ENCODE measurements at regions of chr13 and their contacts with region 1.

Region 1: GRCh38 chr13:51619614-51620013 is 35.4 kb downstream of the WDFY2 start:
- DNase-seq: no peak
- ATAC-seq: no peak
- H3K4me3 Mint-ChIP-seq: no peak overlapping the region
- H3K27ac Mint-ChIP-seq: no peak overlapping the region
- H3K4me1 Mint-ChIP-seq: peaks cover 23% of the 10 kb centered on the region
- H3K27me3 Mint-ChIP-seq: no peaks in the 10 kb centered on the region
- CTCF ChIP-seq: no peak

Region 2: GRCh38 chr13:51659276-51660127 is 39.9 kb after region 1 on chr13:
- CTCF ChIA-PET with region 1: no interaction called
- POLR2A ChIA-PET with region 1: no interaction called
- intact Hi-C with region 1: loop called (anchors 5 kb)
- DNase-seq: no peak
- ATAC-seq: no peak
- H3K4me3 Mint-ChIP-seq: no peak overlapping the region
- H3K27ac Mint-ChIP-seq: no peak overlapping the region
- H3K4me1 Mint-ChIP-seq: peaks cover 17% of the 10 kb centered on the region
- H3K27me3 Mint-ChIP-seq: no peaks in the 10 kb centered on the region
- CTCF ChIP-seq: no peak

Region 3: GRCh38 chr13:52393572-52394357 is 774.2 kb after region 1 on chr13:
- CTCF ChIA-PET with region 1: no interaction called
- POLR2A ChIA-PET with region 1: no interaction called
- intact Hi-C with region 1: no loop called
- DNase-seq: no peak
- ATAC-seq: no peak
- H3K4me3 Mint-ChIP-seq: no peak overlapping the region
- H3K27ac Mint-ChIP-seq: no peak overlapping the region
- H3K4me1 Mint-ChIP-seq: no peaks in the 10 kb centered on the region
- H3K27me3 Mint-ChIP-seq: peaks cover 4% of the 10 kb centered on the region
- CTCF ChIP-seq: no peak

Measured in activated B cell treated with CpG ODN at 0.5 μM for 24 hours (primary cell).